Ascending aorta (tissue), 2 donors: ENCODE measurements at regions of chr3 and their contacts with region 1.

Region 1: GRCh38 chr3:38521391-38521987 is 25.3 kb downstream of the EXOG start:
- DNase-seq: peak in 1 of 2 donors; percentile 74
- H3K4me3 ChIP-seq: no peak overlapping the region
- H3K27ac ChIP-seq: no peak overlapping the region
- H3K4me1 ChIP-seq: no peaks in the 10 kb centered on the region
- H3K27me3 ChIP-seq: no peaks in the 10 kb centered on the region
- CTCF ChIP-seq: peak; percentile 62 to 87 (median 87)

Region 2: GRCh38 chr3:38651154-38651789 is 129.8 kb after region 1 on chr3:
- intact Hi-C with region 1: loop called (anchors 2 kb)
- DNase-seq: peak in 1 of 2 donors; percentile 65
- H3K4me3 ChIP-seq: no peak overlapping the region
- H3K27ac ChIP-seq: no peak overlapping the region
- H3K4me1 ChIP-seq: peaks cover 0 to 9% of the 10 kb centered on the region in 2 donors
- H3K27me3 ChIP-seq: no peaks in the 10 kb centered on the region
- CTCF ChIP-seq: peak; percentile 54 to 93 (median 90)